ENCODE measurements at regions of chr16 and their contacts with region 1.

Region 1: GRCh38 chr16:12095275-12096156 is 119.0 kb downstream of the SNX29 start:
- DNase-seq: no peak
- H3K4me3 ChIP-seq: no peak overlapping the region
- CTCF ChIP-seq: peak; percentile 74

Region 2: GRCh38 chr16:12111223-12111622 is 15.7 kb after region 1 on chr16:
- CTCF ChIA-PET with region 1: interaction called, 95 read pairs
- POLR2A ChIA-PET with region 1: no interaction called
- DNase-seq: no peak
- H3K4me3 ChIP-seq: no peak overlapping the region
- CTCF ChIP-seq: no peak

Region 3: DNA sequence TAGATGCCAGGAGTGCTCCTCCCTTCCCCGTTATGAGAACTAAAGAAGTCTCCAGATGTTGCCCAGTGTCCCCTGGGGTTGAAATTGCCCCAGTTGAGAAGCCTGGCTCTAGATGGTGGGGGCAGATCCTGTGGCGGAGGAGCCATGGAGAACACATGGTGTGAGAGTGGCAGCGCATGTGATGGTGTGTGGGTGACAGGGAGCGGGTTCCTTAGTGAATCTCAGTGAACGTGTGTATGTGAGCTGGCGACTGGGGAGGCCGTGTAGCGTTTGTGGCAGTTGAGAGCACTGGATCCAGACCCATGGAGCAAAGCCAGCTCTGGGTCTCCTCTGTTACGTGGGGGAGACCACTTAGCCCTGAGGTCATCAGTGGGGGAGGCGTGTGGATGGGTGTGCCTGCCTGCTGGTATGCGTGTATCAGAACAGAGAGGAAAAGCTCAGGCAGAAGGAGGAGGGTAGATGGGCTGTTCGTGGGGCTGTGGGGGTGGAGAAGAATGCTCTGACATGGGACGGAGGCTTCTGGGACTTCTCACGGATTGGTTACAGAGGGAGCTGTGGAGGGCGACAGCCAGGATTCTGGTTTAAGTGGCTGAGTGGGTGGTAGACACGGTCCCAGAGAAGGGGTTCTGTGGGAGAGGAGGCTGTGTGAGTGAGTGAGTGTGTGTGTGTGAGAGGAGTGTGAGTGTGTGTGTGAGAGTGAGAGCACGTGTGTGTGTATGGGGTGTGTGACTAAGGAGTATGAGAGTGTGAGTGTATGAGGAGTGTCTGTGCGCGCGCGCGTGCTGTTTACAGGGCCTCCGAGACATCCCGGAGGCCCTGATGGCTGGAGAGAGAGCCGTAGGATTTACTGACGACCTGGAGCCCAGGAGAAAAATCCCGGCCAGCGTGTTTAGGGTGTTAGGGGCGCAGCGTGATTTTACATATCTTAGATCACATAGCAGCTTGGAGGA is 74.8 kb after region 1 on chr16:
- CTCF ChIA-PET with region 1: interaction called, 10 read pairs
- POLR2A ChIA-PET with region 1: no interaction called
- DNase-seq: no peak
- H3K4me3 ChIP-seq: no peak overlapping the region
- CTCF ChIP-seq: no peak

Region 4: DNA sequence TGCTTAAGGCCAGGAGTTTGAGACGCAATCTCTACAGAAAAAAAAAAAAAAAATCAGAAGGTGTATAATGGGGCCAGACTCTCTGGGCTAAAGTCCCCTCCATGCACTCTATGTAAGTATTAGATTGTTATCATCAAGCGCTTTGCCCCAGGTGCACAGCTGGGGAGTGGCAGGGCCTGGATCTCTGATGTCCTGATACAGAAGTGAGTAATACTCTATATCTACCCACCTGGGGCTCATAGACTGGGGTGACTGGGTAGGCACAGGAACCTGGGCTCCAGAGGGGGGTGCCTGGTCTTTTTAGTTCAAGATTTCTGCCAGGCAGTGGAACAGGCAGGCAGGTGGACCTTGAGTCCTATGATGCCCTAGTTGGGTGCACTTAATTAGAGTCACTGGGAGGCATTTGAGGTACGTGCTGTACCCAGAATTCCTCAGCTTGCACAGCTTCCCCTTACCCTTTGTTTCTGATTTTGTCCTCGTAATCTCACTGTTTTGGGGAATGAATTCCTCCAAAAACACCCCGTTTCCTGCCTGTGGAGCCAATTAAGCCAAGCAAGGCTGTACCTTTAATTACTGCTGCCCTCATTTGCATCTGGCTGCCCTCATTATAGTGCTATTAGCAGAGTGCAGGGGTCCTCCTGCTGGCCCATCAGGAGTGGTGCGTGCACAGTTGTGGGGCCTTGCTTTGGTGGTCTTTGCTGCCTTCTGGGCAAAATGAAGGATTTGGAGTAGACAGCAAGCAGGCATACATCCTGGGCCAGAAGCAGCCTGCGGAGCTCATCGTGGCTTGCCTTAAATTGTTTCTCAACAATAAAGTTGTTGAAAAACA is 120.0 kb after region 1 on chr16:
- CTCF ChIA-PET with region 1: interaction called, 32 read pairs
- POLR2A ChIA-PET with region 1: no interaction called
- DNase-seq: no peak
- H3K4me3 ChIP-seq: no peak overlapping the region
- CTCF ChIP-seq: peak; percentile 25

Region 5: GRCh38 chr16:12260647-12261262 is 165.2 kb after region 1 on chr16:
- CTCF ChIA-PET with region 1: interaction called, 16 read pairs
- POLR2A ChIA-PET with region 1: no interaction called
- DNase-seq: no peak
- H3K4me3 ChIP-seq: no peak overlapping the region
- CTCF ChIP-seq: no peak

Region 6: DNA sequence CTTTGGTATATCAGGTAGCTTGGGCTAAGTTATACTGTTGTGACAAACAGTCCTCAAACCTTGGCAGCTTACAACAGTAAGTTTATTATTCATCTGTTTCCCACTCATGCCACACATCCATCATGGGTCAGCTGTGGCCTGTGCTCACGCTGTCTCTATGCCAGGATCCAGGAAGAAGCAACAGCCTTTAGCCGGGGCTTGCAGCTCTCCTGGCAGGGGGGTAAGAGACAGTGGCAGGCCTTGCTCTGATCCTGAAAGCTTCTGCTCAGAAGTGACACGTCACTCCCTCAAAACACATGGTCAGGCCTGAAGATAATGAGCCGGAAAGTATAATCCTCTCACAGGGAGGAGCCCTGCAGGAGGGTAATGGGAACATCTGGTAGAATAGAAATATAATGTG is 330.6 kb after region 1 on chr16:
- CTCF ChIA-PET with region 1: interaction called, 15 read pairs
- POLR2A ChIA-PET with region 1: no interaction called
- DNase-seq: no peak
- H3K4me3 ChIP-seq: no peak overlapping the region
- CTCF ChIP-seq: no peak

Measured in AG04449 (cell line).